OCI-LY7 (cell line): ENCODE measurements at regions of chr21 and their contacts with region 1.

Region 1: DNA sequence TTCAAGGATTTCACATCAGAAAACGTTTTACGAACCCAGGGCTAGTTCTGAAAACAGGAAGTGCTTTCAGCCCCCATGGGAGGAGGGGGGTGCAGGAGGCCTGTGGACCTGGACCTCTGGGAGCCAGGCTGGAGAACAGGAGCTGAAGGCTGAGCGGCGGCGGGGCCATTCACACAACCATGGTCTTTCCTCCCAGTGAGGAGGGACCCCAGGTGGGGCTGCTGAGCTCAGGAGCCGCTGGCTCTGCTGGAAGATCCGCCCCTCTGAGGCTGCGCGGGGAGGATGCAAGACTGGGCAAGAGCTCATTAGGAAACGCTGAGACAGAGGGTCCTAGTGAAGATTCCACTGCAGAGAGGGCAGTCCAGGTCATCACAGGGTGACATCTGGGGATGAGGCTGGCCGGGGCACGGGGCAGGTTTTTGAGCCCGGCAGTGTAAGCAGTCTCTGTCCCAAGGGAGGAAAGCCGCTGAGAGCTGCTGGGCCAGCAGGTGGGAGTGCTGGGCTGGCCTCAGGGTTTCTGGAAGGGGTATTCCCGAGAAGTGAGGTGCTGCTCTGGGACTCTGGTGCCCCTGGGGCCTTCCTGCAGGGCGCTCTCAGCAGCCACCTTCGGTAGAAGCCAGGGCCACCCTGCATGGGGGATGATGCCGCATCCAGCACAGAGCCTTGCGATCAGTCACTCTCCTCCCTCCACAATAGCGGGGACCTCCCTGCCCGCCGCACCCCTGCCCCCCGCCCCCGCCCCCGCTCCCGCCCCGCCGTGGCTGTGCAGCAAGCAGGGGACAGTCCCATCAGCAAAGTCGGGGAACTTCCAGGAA is 7.5 kb downstream of the MX2 start:
- DNase-seq: peak; percentile 71
- H3K4me3 ChIP-seq: peak overlapping the region; percentile 59
- H3K27ac ChIP-seq: peak overlapping the region; percentile 93
- H3K4me1 ChIP-seq: peaks cover 46% of the 10 kb centered on the region
- CTCF ChIP-seq: 0 out of 2 replicates have a peak, but pooled peaks have one; percentile 45

Region 2: GRCh38 chr21:41431788-41432548 is 62.7 kb after region 1 on chr21:
- CTCF ChIA-PET with region 1: interaction called, 3 read pairs
- POLR2A ChIA-PET with region 1: interaction called, 3 read pairs
- intact Hi-C with region 1: loop called (anchors 2 kb)
- DNase-seq: peak; percentile 89
- H3K4me3 ChIP-seq: no peak overlapping the region
- H3K27ac ChIP-seq: peak overlapping the region; percentile 46
- H3K4me1 ChIP-seq: peaks cover 51% of the 10 kb centered on the region
- CTCF ChIP-seq: no peak

Region 3: GRCh38 chr21:41460578-41461527 is 91.5 kb after region 1 on chr21:
- CTCF ChIA-PET with region 1: no interaction called
- POLR2A ChIA-PET with region 1: interaction called, 3 read pairs
- intact Hi-C with region 1: loop called (anchors 5 kb)
- DNase-seq: peak; percentile 67
- H3K4me3 ChIP-seq: no peak overlapping the region
- H3K27ac ChIP-seq: no peak overlapping the region
- H3K4me1 ChIP-seq: no peaks in the 10 kb centered on the region
- CTCF ChIP-seq: peak; percentile 82